Breast epithelium (tissue), 4 donors: ENCODE measurements at regions of chr20 and their contacts with region 1.

Region 1: GRCh38 chr20:10531848-10532247 is 96.7 kb downstream of the SLX4IP start:
- DNase-seq: no peak
- H3K4me3 ChIP-seq: no peak overlapping the region
- H3K27ac ChIP-seq: no peak overlapping the region
- H3K4me1 ChIP-seq: no peaks in the 10 kb centered on the region
- H3K27me3 ChIP-seq: no peaks in the 10 kb centered on the region
- CTCF ChIP-seq: no peak
- POLR2A ChIP-seq: no peak

Region 2: DNA sequence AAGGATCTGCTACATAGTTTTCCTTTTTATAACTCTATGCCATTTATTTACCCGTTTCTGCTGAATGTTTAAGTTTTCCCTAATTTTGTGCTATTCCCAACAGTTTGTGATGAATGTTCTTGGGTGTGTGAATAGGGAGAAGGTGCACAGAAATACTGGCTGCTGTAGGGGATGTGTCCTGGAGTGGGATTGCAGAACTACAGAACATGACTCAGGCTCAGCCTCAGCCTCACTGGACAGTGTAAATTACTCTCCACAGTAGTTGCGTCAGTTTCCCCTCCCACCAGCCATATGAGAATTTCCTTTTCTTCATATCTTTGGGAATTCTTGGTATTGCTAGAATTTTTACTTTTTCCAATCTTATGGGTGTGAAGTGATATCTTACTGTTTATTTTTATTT is 39.8 kb before region 1 on chr20:
- intact Hi-C with region 1: loop called (anchors 2 kb)
- DNase-seq: no peak
- H3K4me3 ChIP-seq: no peak overlapping the region
- H3K27ac ChIP-seq: no peak overlapping the region
- H3K4me1 ChIP-seq: no peaks in the 10 kb centered on the region
- H3K27me3 ChIP-seq: no peaks in the 10 kb centered on the region
- CTCF ChIP-seq: no peak
- POLR2A ChIP-seq: no peak